Endothelial cell of umbilical vein (primary cell): ENCODE measurements at regions of chr4 and their contacts with region 1.

Region 1: DNA sequence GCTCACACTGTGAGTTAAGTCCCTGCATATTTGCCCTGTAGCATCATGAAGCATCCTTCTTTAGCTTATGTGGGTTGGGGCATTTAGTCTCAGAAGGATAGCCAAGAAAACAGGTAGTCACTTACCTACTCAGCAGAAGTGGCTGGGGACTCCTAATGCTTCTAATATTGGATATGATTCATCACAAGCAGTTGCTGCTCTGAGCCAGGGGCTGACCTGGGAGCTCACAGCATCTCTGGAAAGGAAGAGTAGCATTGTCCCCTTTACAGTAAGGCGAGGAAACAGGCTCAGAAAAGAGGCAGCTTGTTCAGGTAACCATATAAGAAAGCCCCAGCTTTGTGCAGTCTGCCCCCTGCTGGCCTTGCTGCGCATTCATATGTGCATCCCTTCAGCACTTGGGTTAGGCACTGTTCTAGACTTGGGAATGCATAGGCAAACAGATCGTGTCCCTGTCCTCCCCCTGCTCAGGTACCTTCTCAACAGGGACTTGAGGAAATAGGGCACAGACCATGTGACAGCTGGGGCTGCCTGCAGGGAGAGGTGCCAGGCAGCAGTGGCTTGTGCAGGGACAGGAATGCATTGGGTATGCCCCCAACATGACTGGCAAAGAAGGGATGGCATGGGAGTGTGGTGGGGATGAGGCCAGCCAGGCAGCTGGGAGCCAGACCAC is 35.7 kb upstream of the TBC1D14 start:
- DNase-seq: peak; percentile 69
- H3K4me3 ChIP-seq: no peak overlapping the region
- H3K27ac ChIP-seq: no peak overlapping the region
- H3K4me1 ChIP-seq: no peaks in the 10 kb centered on the region
- H3K27me3 ChIP-seq: no peaks in the 10 kb centered on the region
- CTCF ChIP-seq: peak; percentile 83 to 88
- POLR2A ChIP-seq: no peak

Region 2: GRCh38 chr4:6724421-6725111 is 149.4 kb before region 1 on chr4:
- CTCF ChIA-PET with region 1: interaction called, 353 read pairs
- POLR2A ChIA-PET with region 1: no interaction called
- dilution Hi-C with region 1: no loop called
- intact Hi-C with region 1: loop called (anchors 1 kb)
- DNase-seq: no peak
- H3K4me3 ChIP-seq: no peak overlapping the region
- H3K27ac ChIP-seq: no peak overlapping the region
- H3K4me1 ChIP-seq: no peaks in the 10 kb centered on the region
- H3K27me3 ChIP-seq: no peaks in the 10 kb centered on the region
- CTCF ChIP-seq: no peak
- POLR2A ChIP-seq: no peak

Region 3: GRCh38 chr4:6760860-6761610 is 112.9 kb before region 1 on chr4:
- CTCF ChIA-PET with region 1: interaction called, 12 read pairs
- POLR2A ChIA-PET with region 1: no interaction called
- dilution Hi-C with region 1: no loop called
- intact Hi-C with region 1: no loop called
- DNase-seq: no peak
- H3K4me3 ChIP-seq: no peak overlapping the region
- H3K27ac ChIP-seq: no peak overlapping the region
- H3K4me1 ChIP-seq: no peaks in the 10 kb centered on the region
- H3K27me3 ChIP-seq: peaks cover 7 to 8% of the 10 kb centered on the region in 2 experiments
- CTCF ChIP-seq: no peak
- POLR2A ChIP-seq: no peak

Region 4: GRCh38 chr4:6857009-6857882 is 16.7 kb before region 1 on chr4:
- CTCF ChIA-PET with region 1: interaction called, 23 read pairs
- POLR2A ChIA-PET with region 1: no interaction called
- dilution Hi-C with region 1: no loop called
- intact Hi-C with region 1: no loop called
- DNase-seq: no peak
- H3K4me3 ChIP-seq: no peak overlapping the region
- H3K27ac ChIP-seq: no peak overlapping the region
- H3K4me1 ChIP-seq: peaks cover 7% of the 10 kb centered on the region
- H3K27me3 ChIP-seq: no peaks in the 10 kb centered on the region
- CTCF ChIP-seq: no peak
- POLR2A ChIP-seq: no peak

Region 5: GRCh38 chr4:7151668-7152227 is 277.8 kb after region 1 on chr4:
- CTCF ChIA-PET with region 1: no interaction called
- POLR2A ChIA-PET with region 1: no interaction called
- dilution Hi-C with region 1: no loop called
- intact Hi-C with region 1: no loop called
- DNase-seq: no peak
- H3K4me3 ChIP-seq: no peak overlapping the region
- H3K27ac ChIP-seq: no peak overlapping the region
- H3K4me1 ChIP-seq: no peaks in the 10 kb centered on the region
- H3K27me3 ChIP-seq: no peaks in the 10 kb centered on the region
- CTCF ChIP-seq: no peak
- POLR2A ChIP-seq: no peak

Region 6: DNA sequence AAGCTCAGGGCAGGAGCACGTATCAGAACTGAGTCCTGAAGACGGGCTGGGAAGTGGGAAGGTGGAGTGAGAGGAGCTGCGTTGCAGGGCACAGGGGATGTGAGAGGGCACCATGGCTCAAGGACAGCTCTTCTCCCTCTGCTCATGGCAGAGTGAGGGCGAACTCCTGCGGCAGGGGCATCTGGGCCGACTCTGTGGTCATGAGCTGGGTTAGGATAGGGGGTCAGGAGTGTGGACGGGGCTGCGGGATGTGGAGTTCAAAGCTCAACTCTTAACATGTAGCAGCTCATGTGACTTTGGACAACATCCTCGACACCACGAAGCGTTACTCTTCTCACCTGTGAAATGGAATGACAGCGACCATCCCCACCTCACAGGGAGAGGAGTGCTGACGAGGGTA is 299.0 kb after region 1 on chr4:
- CTCF ChIA-PET with region 1: no interaction called
- POLR2A ChIA-PET with region 1: no interaction called
- dilution Hi-C with region 1: no loop called
- intact Hi-C with region 1: no loop called
- DNase-seq: no peak
- H3K4me3 ChIP-seq: no peak overlapping the region
- H3K27ac ChIP-seq: no peak overlapping the region
- H3K4me1 ChIP-seq: no peaks in the 10 kb centered on the region
- H3K27me3 ChIP-seq: peaks cover 0 to 5% of the 10 kb centered on the region in 2 experiments
- CTCF ChIP-seq: no peak
- POLR2A ChIP-seq: no peak